ENCODE measurements at regions of chr6 and their contacts with region 1.

Region 1: DNA sequence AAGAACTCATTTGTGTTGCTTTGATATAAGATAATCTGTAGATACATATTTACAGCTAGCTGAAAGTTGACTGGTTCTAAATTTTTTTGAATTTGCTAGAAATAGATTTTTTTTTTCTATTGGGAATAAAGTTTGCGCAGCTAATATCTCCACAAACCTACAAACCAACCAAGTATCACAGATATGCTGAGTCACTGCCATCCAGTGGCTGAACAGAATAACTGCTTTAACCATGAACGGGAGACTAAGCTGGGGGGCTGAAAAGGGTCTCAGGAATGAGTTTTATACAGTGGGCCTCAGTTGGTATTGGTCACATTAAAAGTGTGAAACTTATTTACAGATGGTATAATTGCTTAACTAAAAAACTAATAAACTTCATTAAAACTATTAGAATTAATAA is 326.7 kb upstream of the CNR1 start:
- DNase-seq: peak; percentile 31
- ATAC-seq: peak; percentile 55
- H3K4me3 ChIP-seq: no peak overlapping the region
- H3K27ac ChIP-seq: no peak overlapping the region
- H3K4me1 ChIP-seq: no peaks in the 10 kb centered on the region
- H3K27me3 ChIP-seq: no peaks in the 10 kb centered on the region
- CTCF ChIP-seq: peak; percentile 69

Region 2: GRCh38 chr6:87832025-87832825 is 660.6 kb before region 1 on chr6:
- CTCF ChIA-PET with region 1: no interaction called
- POLR2A ChIA-PET with region 1: no interaction called
- intact Hi-C with region 1: loop called (anchors 5 kb)
- DNase-seq: peak; percentile 49
- ATAC-seq: peak; percentile 64
- H3K4me3 ChIP-seq: peak overlapping the region; percentile 70
- H3K27ac ChIP-seq: no peak overlapping the region
- H3K4me1 ChIP-seq: no peaks in the 10 kb centered on the region
- H3K27me3 ChIP-seq: no peaks in the 10 kb centered on the region
- CTCF ChIP-seq: peak; percentile 69

Region 3: GRCh38 chr6:87929843-87930288 is 563.0 kb before region 1 on chr6:
- CTCF ChIA-PET with region 1: no interaction called
- POLR2A ChIA-PET with region 1: no interaction called
- intact Hi-C with region 1: loop called (anchors 2 kb)
- DNase-seq: peak; percentile 75
- ATAC-seq: peak; percentile 99
- H3K4me3 ChIP-seq: no peak overlapping the region
- H3K27ac ChIP-seq: no peak overlapping the region
- H3K4me1 ChIP-seq: no peaks in the 10 kb centered on the region
- H3K27me3 ChIP-seq: 0 out of 2 replicates have a peak, but pooled peaks cover 3% of the 10 kb centered on the region
- CTCF ChIP-seq: peak; percentile 79

Region 4: GRCh38 chr6:88512951-88513350 is 20.1 kb after region 1 on chr6:
- CTCF ChIA-PET with region 1: no interaction called
- POLR2A ChIA-PET with region 1: no interaction called
- intact Hi-C with region 1: no loop called
- DNase-seq: no peak
- ATAC-seq: no peak
- H3K4me3 ChIP-seq: no peak overlapping the region
- H3K27ac ChIP-seq: no peak overlapping the region
- H3K4me1 ChIP-seq: no peaks in the 10 kb centered on the region
- H3K27me3 ChIP-seq: peaks cover 4% of the 10 kb centered on the region; the same call in 1 of the 2 replicates
- CTCF ChIP-seq: no peak

Region 5: DNA sequence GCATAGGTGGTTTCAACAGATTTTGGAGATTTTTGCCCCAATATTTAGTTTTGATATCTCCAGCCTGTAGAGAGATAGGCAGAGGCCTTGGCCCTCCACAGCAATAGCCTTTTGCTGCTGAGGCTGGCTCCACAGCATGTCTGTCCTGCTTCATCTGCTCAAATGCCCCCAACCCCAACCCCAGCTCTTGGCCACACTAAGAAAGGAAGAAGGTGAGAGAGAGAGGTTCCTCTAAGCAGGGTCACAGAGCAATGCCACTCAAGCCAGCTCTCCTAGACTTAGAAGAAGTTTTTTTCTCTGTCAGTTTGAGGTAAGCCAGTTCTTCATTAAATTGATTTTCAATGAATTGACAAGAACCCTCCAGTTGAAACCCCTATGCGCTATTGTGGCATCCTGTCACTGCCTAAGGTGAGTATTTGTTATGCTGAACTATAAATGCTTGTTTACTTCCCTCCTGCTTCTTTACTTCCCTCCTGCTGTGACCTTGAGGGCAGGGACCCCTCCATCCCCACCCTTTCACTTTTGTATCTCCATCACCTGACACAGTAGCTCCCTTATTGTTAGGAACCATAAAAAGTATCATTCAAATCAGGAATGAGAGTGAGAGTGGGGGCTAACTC is 39.5 kb after region 1 on chr6:
- CTCF ChIA-PET with region 1: no interaction called
- POLR2A ChIA-PET with region 1: no interaction called
- intact Hi-C with region 1: no loop called
- DNase-seq: no peak
- ATAC-seq: no peak
- H3K4me3 ChIP-seq: no peak overlapping the region
- H3K27ac ChIP-seq: no peak overlapping the region
- H3K4me1 ChIP-seq: no peaks in the 10 kb centered on the region
- H3K27me3 ChIP-seq: no peaks in the 10 kb centered on the region; the same call in none of the 2 replicates
- CTCF ChIP-seq: no peak

Measured in PC-3 (cell line).